Esophagus squamous epithelium (tissue), 5 donors: ENCODE measurements at regions of chrX and their contacts with region 1.

Region 1: GRCh38 chrX:2819345-2820135 is 9.2 kb upstream of the GYG2 start:
- DNase-seq: no peak
- H3K4me3 ChIP-seq: no peak overlapping the region
- H3K27ac ChIP-seq: no peak overlapping the region
- H3K4me1 ChIP-seq: no peaks in the 10 kb centered on the region
- H3K27me3 ChIP-seq: no peaks in the 10 kb centered on the region
- CTCF ChIP-seq: peak in 5 of 6 experiments; percentile 9 to 49 (median 24)
- POLR2A ChIP-seq: no peak

Region 2: GRCh38 chrX:2640275-2641150 is 179.0 kb before region 1 on chrX:
- intact Hi-C with region 1: loop called (anchors 10 kb)
- DNase-seq: no peak
- H3K4me3 ChIP-seq: no peak overlapping the region
- H3K27ac ChIP-seq: no peak overlapping the region
- H3K4me1 ChIP-seq: no peaks in the 10 kb centered on the region
- H3K27me3 ChIP-seq: no peaks in the 10 kb centered on the region
- CTCF ChIP-seq: no peak
- POLR2A ChIP-seq: no peak

Region 3: GRCh38 chrX:2707334-2707760 is 112.2 kb before region 1 on chrX:
- intact Hi-C with region 1: loop called (anchors 10 kb)
- DNase-seq: no peak
- H3K4me3 ChIP-seq: peak overlapping the region in 1 of 4 donors; percentile 43
- H3K27ac ChIP-seq: peak overlapping the region; percentile 72 to 83 (median 78)
- H3K4me1 ChIP-seq: peaks cover 64 to 94% (median 75%) of the 10 kb centered on the region in 3 donors
- H3K27me3 ChIP-seq: no peaks in the 10 kb centered on the region
- CTCF ChIP-seq: peak in 1 of 6 experiments; percentile 5
- POLR2A ChIP-seq: no peak